Activated B cell treated with CpG ODN at 0.5 μM for 24 hours (primary cell): ENCODE measurements at regions of chr20 and their contacts with region 1.

Region 1: GRCh38 chr20:46562373-46563169 is 12.1 kb upstream of the OCSTAMP start:
- DNase-seq: peak; percentile 35
- ATAC-seq: peak; percentile 89
- H3K4me3 Mint-ChIP-seq: no peak overlapping the region
- H3K27ac Mint-ChIP-seq: no peak overlapping the region
- H3K4me1 Mint-ChIP-seq: peaks cover 2% of the 10 kb centered on the region
- H3K27me3 Mint-ChIP-seq: peaks cover 5% of the 10 kb centered on the region
- CTCF ChIP-seq: peak; percentile 80

Region 2: DNA sequence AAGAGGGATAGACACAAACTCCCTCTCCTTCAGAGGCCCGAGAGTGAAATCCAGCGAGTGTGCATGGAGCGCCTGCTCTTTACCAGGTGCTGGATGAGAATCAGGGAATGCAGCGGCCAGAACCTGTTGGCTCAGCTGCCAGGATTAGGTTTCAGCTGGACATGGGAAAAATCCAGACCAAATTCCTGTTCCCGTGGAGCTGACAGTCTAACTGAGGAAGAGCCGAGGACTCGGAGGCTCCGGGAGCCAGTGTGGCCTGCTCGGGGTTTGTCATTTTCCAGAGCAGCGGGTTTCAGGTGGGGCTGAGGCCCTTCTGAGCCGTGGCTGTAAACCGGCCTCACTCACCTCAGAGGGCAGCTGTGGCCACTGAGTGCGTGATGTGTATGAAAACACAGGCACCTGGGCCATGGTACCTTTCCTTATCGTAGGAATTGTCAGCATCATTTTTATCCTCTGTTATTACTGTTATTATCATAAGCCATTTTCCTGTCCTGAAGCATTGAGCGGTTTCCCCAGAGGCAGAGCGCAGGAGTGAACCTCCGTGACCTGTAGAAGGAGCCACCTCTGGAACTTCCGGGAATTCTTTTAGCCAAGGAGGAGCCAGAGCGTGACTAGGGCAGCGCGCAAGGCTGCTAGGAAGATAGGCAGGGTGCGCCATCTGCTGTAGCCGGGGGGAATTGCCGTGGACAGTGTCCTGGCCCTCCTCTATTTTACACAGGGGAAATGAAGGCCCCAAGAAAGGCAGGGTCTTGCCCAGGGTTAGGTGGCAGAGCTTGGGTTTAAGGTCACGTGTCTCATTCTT is 1952.9 kb before region 1 on chr20:
- CTCF ChIA-PET with region 1: no interaction called
- POLR2A ChIA-PET with region 1: no interaction called
- intact Hi-C with region 1: no loop called
- DNase-seq: peak; percentile 79
- ATAC-seq: peak; percentile 95
- H3K4me3 Mint-ChIP-seq: peak overlapping the region; percentile 70
- H3K27ac Mint-ChIP-seq: peak overlapping the region; percentile 93
- H3K4me1 Mint-ChIP-seq: peaks cover 62% of the 10 kb centered on the region
- H3K27me3 Mint-ChIP-seq: no peaks in the 10 kb centered on the region
- CTCF ChIP-seq: peak; percentile 92

Region 3: GRCh38 chr20:46307139-46307998 is 255.2 kb before region 1 on chr20:
- CTCF ChIA-PET with region 1: no interaction called
- POLR2A ChIA-PET with region 1: no interaction called
- intact Hi-C with region 1: loop called (anchors 10 kb)
- DNase-seq: peak; percentile 61
- ATAC-seq: peak; percentile 87
- H3K4me3 Mint-ChIP-seq: peak overlapping the region; percentile 16
- H3K27ac Mint-ChIP-seq: no peak overlapping the region
- H3K4me1 Mint-ChIP-seq: peaks cover 11% of the 10 kb centered on the region
- H3K27me3 Mint-ChIP-seq: peaks cover 67% of the 10 kb centered on the region
- CTCF ChIP-seq: no peak

Region 4: GRCh38 chr20:46485431-46485830 is 77.1 kb before region 1 on chr20:
- CTCF ChIA-PET with region 1: no interaction called
- POLR2A ChIA-PET with region 1: no interaction called
- intact Hi-C with region 1: loop called (anchors 1 kb)
- DNase-seq: no peak
- ATAC-seq: no peak
- H3K4me3 Mint-ChIP-seq: no peak overlapping the region
- H3K27ac Mint-ChIP-seq: no peak overlapping the region
- H3K4me1 Mint-ChIP-seq: no peaks in the 10 kb centered on the region
- H3K27me3 Mint-ChIP-seq: peaks cover 33% of the 10 kb centered on the region
- CTCF ChIP-seq: no peak

Region 5: DNA sequence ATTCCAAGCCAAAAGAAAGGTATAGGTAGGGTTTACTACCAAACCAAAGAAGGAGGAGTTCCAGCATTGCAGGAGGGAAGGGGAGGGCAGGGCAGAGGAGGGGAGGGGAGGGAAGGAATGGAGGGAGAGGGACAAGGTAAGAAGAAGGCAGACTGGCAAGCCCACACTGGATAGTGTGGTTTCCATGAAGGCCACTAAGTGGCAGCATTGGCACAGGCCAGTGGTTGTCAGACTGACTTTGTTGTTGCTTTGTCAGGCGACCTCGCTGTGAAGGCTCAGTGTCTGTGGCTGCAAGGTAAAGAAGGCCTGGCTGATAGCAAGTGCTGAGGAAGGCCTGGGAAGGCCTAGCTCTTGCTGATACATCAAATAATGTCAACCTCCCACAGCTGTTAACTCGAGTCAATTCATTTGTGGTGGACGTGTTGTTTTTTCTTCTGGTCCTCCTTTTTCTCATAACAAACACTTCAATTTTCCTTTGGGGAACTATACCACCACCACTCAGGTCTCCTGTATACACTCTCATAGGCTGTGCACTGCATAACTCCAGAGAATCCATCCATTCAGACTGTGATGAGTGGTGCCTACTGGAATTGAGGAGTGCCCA is 41.5 kb before region 1 on chr20:
- CTCF ChIA-PET with region 1: interaction called, 7 read pairs
- POLR2A ChIA-PET with region 1: no interaction called
- intact Hi-C with region 1: loop called (anchors 1 kb)
- DNase-seq: no peak
- ATAC-seq: peak; percentile 79
- H3K4me3 Mint-ChIP-seq: no peak overlapping the region
- H3K27ac Mint-ChIP-seq: no peak overlapping the region
- H3K4me1 Mint-ChIP-seq: no peaks in the 10 kb centered on the region
- H3K27me3 Mint-ChIP-seq: peaks cover 17% of the 10 kb centered on the region
- CTCF ChIP-seq: no peak

Region 6: GRCh38 chr20:46681032-46681854 is 118.7 kb after region 1 on chr20:
- CTCF ChIA-PET with region 1: no interaction called
- POLR2A ChIA-PET with region 1: no interaction called
- intact Hi-C with region 1: loop called (anchors 1 kb)
- DNase-seq: no peak
- ATAC-seq: peak; percentile 71
- H3K4me3 Mint-ChIP-seq: no peak overlapping the region
- H3K27ac Mint-ChIP-seq: peak overlapping the region; percentile 21
- H3K4me1 Mint-ChIP-seq: peaks cover 42% of the 10 kb centered on the region
- H3K27me3 Mint-ChIP-seq: no peaks in the 10 kb centered on the region
- CTCF ChIP-seq: no peak